ENCODE measurements at regions of chr2 and their contacts with region 1.

Region 1: DNA sequence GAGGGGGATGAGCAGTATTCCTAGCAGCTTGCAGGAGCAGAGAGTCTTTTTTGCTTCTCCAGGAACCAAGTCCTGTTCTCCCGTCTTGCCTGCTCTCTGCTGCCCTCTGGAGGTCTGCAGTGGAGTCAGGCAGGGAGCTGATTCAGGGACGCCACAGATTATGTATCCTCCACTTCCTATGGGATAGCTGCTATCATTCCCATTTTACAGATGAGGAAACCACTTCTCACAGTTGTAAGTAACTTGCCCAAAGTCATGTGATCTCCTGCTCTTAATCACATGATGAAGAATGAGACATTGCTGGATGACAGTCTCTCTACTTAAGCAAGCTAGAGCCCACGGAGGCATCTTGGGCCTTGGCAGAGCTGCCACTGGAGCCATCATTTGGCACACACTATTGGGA is 8.3 kb downstream of the SLC4A5 start:
- DNase-seq: peak; percentile 78
- H3K4me3 ChIP-seq: no peak overlapping the region
- H3K27ac ChIP-seq: no peak overlapping the region
- H3K4me1 ChIP-seq: no peaks in the 10 kb centered on the region
- H3K27me3 ChIP-seq: no peaks in the 10 kb centered on the region
- CTCF ChIP-seq: peak; percentile 89

Region 2: GRCh38 chr2:73823916-73824523 is 510.9 kb before region 1 on chr2:
- CTCF ChIA-PET with region 1: interaction called, 4 read pairs
- POLR2A ChIA-PET with region 1: no interaction called
- intact Hi-C with region 1: loop called (anchors 1 kb)
- DNase-seq: peak; percentile 79
- H3K4me3 ChIP-seq: no peak overlapping the region
- H3K27ac ChIP-seq: no peak overlapping the region
- H3K4me1 ChIP-seq: peaks cover 9% of the 10 kb centered on the region
- H3K27me3 ChIP-seq: no peaks in the 10 kb centered on the region
- CTCF ChIP-seq: peak; percentile 83

Region 3: DNA sequence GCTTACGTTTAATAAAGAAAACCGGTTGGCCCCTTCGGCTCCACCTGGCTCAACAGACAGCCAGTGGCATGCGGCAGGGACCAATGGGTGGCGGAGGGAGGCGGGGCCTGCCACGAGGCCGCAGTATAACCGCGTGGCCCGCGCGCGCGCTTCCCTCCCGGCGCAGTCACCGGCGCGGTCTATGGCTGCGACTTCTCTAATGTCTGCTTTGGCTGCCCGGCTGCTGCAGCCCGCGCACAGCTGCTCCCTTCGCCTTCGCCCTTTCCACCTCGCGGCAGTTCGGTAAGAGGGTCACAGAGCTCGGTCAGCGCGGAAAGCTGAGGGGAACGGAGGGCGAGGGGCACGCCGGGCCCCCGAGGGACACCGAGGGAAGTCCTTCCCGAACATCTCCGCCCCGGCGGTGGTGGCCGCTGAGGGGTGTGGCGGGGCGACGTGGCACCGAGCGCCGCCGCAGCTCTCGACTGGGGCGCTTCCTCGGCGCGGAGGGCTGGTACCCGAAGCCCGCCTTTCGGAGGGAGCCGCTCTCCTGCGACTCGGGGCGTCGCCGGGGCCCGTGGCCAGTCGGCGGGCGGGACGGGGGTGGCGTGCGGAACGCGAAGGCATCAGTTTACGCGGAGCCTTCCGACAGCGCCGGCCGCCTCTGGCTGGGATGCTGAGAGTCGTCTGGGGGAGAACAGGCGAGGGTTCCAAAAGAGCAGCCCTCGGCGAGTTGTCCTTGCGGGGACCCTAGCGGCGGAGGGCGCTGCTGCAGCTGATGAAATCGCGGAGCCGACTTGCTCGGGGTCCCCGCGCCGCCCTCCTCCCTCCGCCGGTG is 136.3 kb before region 1 on chr2 and contains the start of gene MTHFD2:
- CTCF ChIA-PET with region 1: no interaction called
- POLR2A ChIA-PET with region 1: no interaction called
- intact Hi-C with region 1: no loop called
- DNase-seq: peak; percentile 98
- H3K4me3 ChIP-seq: peak within 1 kb of the TSS; percentile 79
- H3K27ac ChIP-seq: peak within 1 kb of the TSS; percentile 99
- H3K4me1 ChIP-seq: peaks cover 17% of the 10 kb centered on the region
- H3K27me3 ChIP-seq: no peaks in the 10 kb centered on the region
- CTCF ChIP-seq: peak; percentile 79
- total RNA-seq, gene MTHFD2: 252 and 293 TPM in 2 replicates

Region 4: DNA sequence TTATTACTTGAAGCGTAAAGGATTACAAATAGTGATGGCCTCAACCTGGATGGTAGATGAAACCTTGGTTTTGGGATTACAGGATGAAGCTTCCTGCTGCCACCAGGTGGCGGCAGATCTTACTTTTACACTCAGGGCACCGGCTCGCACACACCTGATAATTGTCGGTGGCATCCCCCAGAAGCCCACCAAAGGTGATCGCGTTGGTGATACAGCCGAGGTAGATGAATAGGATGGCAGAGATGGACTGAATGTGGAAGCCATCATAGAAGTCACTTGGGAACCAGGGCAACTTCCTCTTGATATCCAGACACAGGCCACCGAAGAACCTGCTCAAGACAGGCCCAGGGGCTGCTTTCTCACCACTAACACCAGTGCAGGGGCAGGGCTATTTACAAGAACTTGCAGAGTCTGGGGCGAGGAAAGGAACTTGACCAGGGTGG is 84.7 kb before region 1 on chr2:
- CTCF ChIA-PET with region 1: interaction called, 14 read pairs
- POLR2A ChIA-PET with region 1: no interaction called
- intact Hi-C with region 1: loop called (anchors 2 kb)
- DNase-seq: peak; percentile 47
- H3K4me3 ChIP-seq: no peak overlapping the region
- H3K27ac ChIP-seq: no peak overlapping the region
- H3K4me1 ChIP-seq: no peaks in the 10 kb centered on the region
- H3K27me3 ChIP-seq: no peaks in the 10 kb centered on the region
- CTCF ChIP-seq: peak; percentile 83